Dorsolateral prefrontal cortex (tissue), 120 donors: ENCODE measurements at regions of chr17 and their contacts with region 1.

Region 1: GRCh38 chr17:7484067-7484918 is at the start of gene POLR2A:
- DNase-seq: peak; percentile 96 to 98 (median 97)
- H3K4me3 ChIP-seq: peak within 1 kb of the TSS; percentile 61 to 98 (median 84)
- H3K27ac ChIP-seq: peak within 1 kb of the TSS; percentile 94 to 100 (median 100)
- H3K27me3 ChIP-seq: no peaks in the 10 kb centered on the region
- CTCF ChIP-seq: peak in 10 of 56 donors; percentile 4 to 61 (median 44)
- total RNA-seq, gene POLR2A: 83.5 to 163 (median 124) TPM

Region 2: GRCh38 chr17:7403977-7404736 is 80.1 kb before region 1 on chr17 and contains the start of gene TMEM256:
- intact Hi-C with region 1: loop called (anchors 1 kb)
- DNase-seq: peak; percentile 98 to 100 (median 99)
- H3K4me3 ChIP-seq: peak within 1 kb of the TSS; percentile 55 to 89 (median 79)
- H3K27ac ChIP-seq: peak within 1 kb of the TSS; percentile 66 to 97 (median 92)
- H3K27me3 ChIP-seq: no peaks in the 10 kb centered on the region
- CTCF ChIP-seq: peak in 28 of 56 donors; percentile 4 to 44 (median 24)
- total RNA-seq, gene TMEM256: 25.4 to 80.3 (median 44.3) TPM

Region 3: GRCh38 chr17:7435221-7435675 is 49.0 kb before region 1 on chr17 and contains the start of gene TMEM102:
- intact Hi-C with region 1: loop called (anchors 2 to 5 kb)
- DNase-seq: peak; percentile 78 to 96 (median 92)
- H3K4me3 ChIP-seq: peak within 1 kb of the TSS in 58 of 59 donors; percentile 28 to 74 (median 52)
- H3K27ac ChIP-seq: peak within 1 kb of the TSS in 23 of 59 donors; percentile 5 to 79 (median 30)
- H3K27me3 ChIP-seq: peaks cover 0 to 58% (median 33%) of the 10 kb centered on the region in 45 donors
- CTCF ChIP-seq: peak in 21 of 56 donors; percentile 8 to 54 (median 19)
- total RNA-seq, gene TMEM102: 0.24 to 3.3 (median 0.97) TPM in 113 of 120 experiments, not detected in the others